ENCODE measurements at regions of chr12 and their contacts with region 1.

Region 1: DNA sequence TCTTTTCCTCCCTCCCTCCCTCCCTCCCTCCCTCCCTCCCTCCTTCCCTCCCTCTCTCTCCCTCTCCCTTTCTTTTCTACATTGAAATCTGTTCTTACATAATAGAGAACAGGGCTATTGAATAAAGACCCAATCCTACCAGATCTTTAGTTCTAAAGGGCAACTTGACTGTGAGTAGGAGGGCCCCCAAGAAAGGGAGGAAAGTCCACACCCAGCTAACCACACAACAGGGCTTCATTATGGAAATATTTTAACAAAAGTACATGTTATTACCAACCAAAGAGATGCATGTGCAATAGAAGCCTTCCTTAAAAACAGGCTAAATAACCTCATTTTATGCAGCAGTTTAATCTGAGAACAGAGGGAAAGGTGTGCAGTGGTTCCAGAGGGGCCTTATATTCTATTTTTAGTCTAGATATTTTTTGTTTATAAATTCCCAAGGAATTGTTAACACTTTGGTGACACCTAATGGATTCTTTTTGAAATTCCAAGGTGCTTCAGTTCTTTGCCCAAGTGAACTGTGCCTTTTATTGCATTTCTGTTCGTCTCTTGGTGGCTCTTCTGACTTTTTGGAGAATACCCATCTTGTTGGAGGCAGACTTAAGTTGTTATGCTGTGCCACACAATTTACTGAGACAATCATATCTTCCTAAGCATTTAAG is 63.0 kb downstream of the GNS start:
- DNase-seq: no peak
- H3K4me3 ChIP-seq: no peak overlapping the region
- H3K27ac ChIP-seq: peak overlapping the region in 1 of 59 donors; percentile 21
- H3K27me3 ChIP-seq: no peaks in the 10 kb centered on the region
- CTCF ChIP-seq: peak in 55 of 56 donors; percentile 27 to 74 (median 49)

Region 2: DNA sequence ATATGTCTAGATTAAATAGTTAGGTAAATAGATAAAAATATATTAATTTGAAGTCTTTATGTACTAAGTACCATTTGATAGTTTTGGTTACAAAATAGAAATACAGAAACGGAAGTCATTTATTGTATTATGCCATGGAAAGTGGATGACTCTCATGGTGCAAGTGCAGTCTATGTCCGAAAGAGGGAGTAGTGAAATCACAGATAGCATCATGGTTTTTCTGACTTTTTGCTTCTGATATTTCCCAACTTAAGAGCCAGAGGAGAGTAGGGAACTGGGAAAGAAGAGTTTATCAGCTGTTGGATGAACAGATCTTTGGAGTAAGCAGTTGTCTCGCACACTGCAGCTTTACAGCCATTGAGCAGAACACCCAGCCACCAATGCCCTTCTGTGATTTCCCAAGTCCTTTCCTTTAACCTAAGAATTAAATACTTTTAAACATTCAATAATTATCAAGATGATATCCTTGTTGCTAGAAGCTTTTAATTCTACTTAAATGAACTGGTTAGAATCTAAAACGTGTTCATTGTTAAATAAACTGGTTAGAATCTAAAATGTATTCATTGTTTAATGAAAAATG is 870.1 kb before region 1 on chr12:
- intact Hi-C with region 1: loop called in 1 of 2 experiments (anchors 5 kb)
- DNase-seq: no peak
- H3K4me3 ChIP-seq: no peak overlapping the region
- H3K27ac ChIP-seq: no peak overlapping the region
- H3K27me3 ChIP-seq: peaks cover 0 to 3% (median 0%) of the 10 kb centered on the region in 45 donors
- CTCF ChIP-seq: peak; percentile 51 to 92 (median 80)

Region 3: GRCh38 chr12:64551698-64552097 is 144.5 kb before region 1 on chr12:
- intact Hi-C with region 1: loop called (anchors 2 kb)
- DNase-seq: no peak
- H3K4me3 ChIP-seq: no peak overlapping the region
- H3K27ac ChIP-seq: no peak overlapping the region
- H3K27me3 ChIP-seq: peaks cover 0 to 2% (median 0%) of the 10 kb centered on the region in 45 donors
- CTCF ChIP-seq: no peak

Region 4: DNA sequence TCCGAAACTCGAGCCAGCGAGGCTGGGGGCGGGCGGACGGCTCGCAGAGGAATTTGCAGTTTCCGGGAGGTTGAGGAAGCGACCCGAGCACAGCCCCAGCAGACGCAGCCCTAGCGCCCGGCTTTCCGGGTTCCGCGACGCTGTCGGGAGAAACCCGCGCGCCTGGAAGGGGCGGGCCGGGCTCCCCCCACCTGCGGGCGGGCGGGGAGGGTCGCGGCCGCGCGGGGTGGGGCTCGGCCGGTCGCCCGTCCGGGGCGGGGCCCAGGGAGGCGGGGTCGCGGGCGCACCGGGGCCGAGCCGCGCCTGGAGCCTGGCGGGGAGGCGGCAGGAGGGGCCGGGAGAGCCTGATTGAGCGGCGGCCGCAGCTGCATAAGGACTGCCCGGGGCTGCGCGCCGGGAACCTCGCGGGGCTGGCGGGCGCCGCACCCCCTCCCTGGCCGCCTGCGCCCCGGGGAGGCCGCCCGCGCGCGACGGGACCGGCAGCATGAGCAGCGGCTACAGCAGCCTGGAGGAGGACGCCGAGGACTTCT is 86.0 kb before region 1 on chr12 and contains the start of gene RASSF3:
- intact Hi-C with region 1: loop called in 1 of 2 experiments (anchors 10 kb)
- DNase-seq: peak in 4 of 10 donors; percentile 5 to 59 (median 38)
- H3K4me3 ChIP-seq: peak within 1 kb of the TSS; percentile 49 to 91 (median 77)
- H3K27ac ChIP-seq: peak within 1 kb of the TSS in 56 of 59 donors; percentile 8 to 89 (median 80)
- H3K27me3 ChIP-seq: no peaks in the 10 kb centered on the region
- CTCF ChIP-seq: no peak
- total RNA-seq, gene RASSF3: 6.5 to 38.3 (median 12.8) TPM